CD4-positive, alpha-beta memory T cell (primary cell): ENCODE measurements at regions of chr7 and their contacts with region 1.

Region 1: GRCh38 chr7:104923010-104923421 is 91.0 kb upstream of the KMT2E start:
- DNase-seq: peak; percentile 63 to 79 (median 67)
- H3K4me3 ChIP-seq: no peak overlapping the region
- H3K4me3 Mint-ChIP-seq: no peak overlapping the region
- H3K27ac ChIP-seq: no peak overlapping the region
- H3K27ac Mint-ChIP-seq: peak overlapping the region in 5 of 7 donors; percentile 42 to 83 (median 62)
- H3K4me1 ChIP-seq: peaks cover 6% of the 10 kb centered on the region
- H3K4me1 Mint-ChIP-seq: peaks cover 0 to 6% (median 4%) of the 10 kb centered on the region in 4 donors
- H3K27me3 ChIP-seq: no peaks in the 10 kb centered on the region
- H3K27me3 Mint-ChIP-seq: no peaks in the 10 kb centered on the region

Region 2: GRCh38 chr7:103296901-103297836 is 1625.8 kb before region 1 on chr7 and contains the start of gene PMPCB:
- CTCF ChIA-PET with region 1: interaction called, 3 read pairs
- POLR2A ChIA-PET with region 1: no interaction called
- intact Hi-C with region 1: loop called (anchors 1 kb)
- DNase-seq: peak; percentile 93 to 96 (median 94)
- H3K4me3 ChIP-seq: peak within 1 kb of the TSS; percentile 70 to 76
- H3K4me3 Mint-ChIP-seq: peak within 1 kb of the TSS; percentile 83 to 94 (median 92)
- H3K27ac ChIP-seq: peak within 1 kb of the TSS; percentile 88
- H3K27ac Mint-ChIP-seq: peak within 1 kb of the TSS; percentile 90 to 96 (median 93)
- H3K4me1 ChIP-seq: peaks cover 29% of the 10 kb centered on the region
- H3K4me1 Mint-ChIP-seq: peaks cover 20 to 46% (median 30%) of the 10 kb centered on the region in 4 donors
- H3K27me3 ChIP-seq: no peaks in the 10 kb centered on the region
- H3K27me3 Mint-ChIP-seq: peaks cover 0 to under 1% of the 10 kb centered on the region in 2 donors
- total RNA-seq, gene PMPCB: 72.7 to 76.2 TPM

Region 3: GRCh38 chr7:104878577-104878976 is 44.4 kb before region 1 on chr7:
- CTCF ChIA-PET with region 1: interaction called, 339 read pairs
- POLR2A ChIA-PET with region 1: interaction called, 3 read pairs
- intact Hi-C with region 1: loop called (anchors 1 kb)
- DNase-seq: no peak
- H3K4me3 ChIP-seq: no peak overlapping the region
- H3K4me3 Mint-ChIP-seq: peak overlapping the region in 6 of 8 donors; percentile 5 to 68 (median 24)
- H3K27ac ChIP-seq: no peak overlapping the region
- H3K27ac Mint-ChIP-seq: peak overlapping the region in 4 of 7 donors; percentile 14 to 67 (median 32)
- H3K4me1 ChIP-seq: peaks cover 12% of the 10 kb centered on the region
- H3K4me1 Mint-ChIP-seq: peaks cover 4 to 17% (median 14%) of the 10 kb centered on the region in 4 donors
- H3K27me3 ChIP-seq: no peaks in the 10 kb centered on the region
- H3K27me3 Mint-ChIP-seq: no peaks in the 10 kb centered on the region

Region 4: DNA sequence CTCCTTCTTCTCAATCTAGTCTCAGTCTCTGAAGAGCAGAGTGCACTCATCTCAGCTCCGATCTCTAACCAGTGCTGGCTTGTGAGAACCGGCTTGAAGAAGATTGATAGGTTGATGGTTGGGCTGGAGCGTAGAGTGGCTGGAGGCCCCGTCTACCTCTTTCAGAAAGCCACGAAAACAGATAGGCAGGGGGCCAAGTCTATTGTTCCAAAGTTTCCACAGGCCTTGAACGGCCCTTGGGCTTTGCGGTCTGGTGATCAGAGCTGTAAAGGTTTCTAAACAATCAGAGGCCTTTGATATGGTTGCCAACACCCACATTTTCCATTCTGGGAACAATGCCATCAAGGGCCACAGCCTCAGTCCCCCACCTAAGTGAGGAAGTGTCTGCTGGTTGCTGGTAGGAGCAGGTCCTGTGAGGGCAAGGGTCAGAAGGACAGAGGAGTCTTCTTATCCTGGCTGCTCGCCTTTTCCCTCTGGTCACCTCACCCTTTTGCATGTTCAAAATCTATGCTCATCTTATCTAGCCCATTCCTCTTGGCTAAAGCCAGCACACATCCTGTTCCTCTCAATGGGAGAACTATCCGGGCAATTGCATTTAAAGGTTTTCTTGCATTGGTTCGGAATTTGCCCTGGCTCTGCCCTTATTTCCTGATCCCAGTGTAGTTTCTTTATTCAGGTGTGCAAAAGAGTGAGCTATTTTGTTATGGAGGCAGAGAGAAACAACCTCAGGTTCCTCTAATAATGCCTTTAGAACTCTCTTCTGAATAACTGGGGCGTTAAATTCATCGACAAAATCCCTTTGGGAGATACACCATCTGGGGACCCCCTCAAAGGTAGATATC is 20.7 kb after region 1 on chr7:
- CTCF ChIA-PET with region 1: interaction called, 10 read pairs
- POLR2A ChIA-PET with region 1: interaction called, 3 read pairs
- intact Hi-C with region 1: loop called (anchors 1 kb)
- DNase-seq: peak; percentile 75 to 92 (median 81)
- H3K4me3 ChIP-seq: peak overlapping the region; percentile 1 to 15
- H3K4me3 Mint-ChIP-seq: peak overlapping the region; percentile 82 to 92 (median 88)
- H3K27ac ChIP-seq: peak overlapping the region; percentile 94
- H3K27ac Mint-ChIP-seq: peak overlapping the region; percentile 100
- H3K4me1 ChIP-seq: peaks cover 59% of the 10 kb centered on the region
- H3K4me1 Mint-ChIP-seq: peaks cover 45 to 71% (median 58%) of the 10 kb centered on the region in 4 donors
- H3K27me3 ChIP-seq: no peaks in the 10 kb centered on the region
- H3K27me3 Mint-ChIP-seq: peaks cover 0 to 1% of the 10 kb centered on the region in 2 donors

Region 5: GRCh38 chr7:105336009-105336408 is 413.0 kb after region 1 on chr7:
- CTCF ChIA-PET with region 1: no interaction called
- POLR2A ChIA-PET with region 1: no interaction called
- intact Hi-C with region 1: loop called (anchors 1 kb)
- DNase-seq: peak in 3 of 5 donors; percentile 17 to 34 (median 22)
- H3K4me3 ChIP-seq: no peak overlapping the region
- H3K4me3 Mint-ChIP-seq: no peak overlapping the region
- H3K27ac ChIP-seq: no peak overlapping the region
- H3K27ac Mint-ChIP-seq: no peak overlapping the region
- H3K4me1 ChIP-seq: peaks cover 13% of the 10 kb centered on the region
- H3K4me1 Mint-ChIP-seq: peaks cover 19 to 31% (median 26%) of the 10 kb centered on the region in 4 donors
- H3K27me3 ChIP-seq: no peaks in the 10 kb centered on the region
- H3K27me3 Mint-ChIP-seq: no peaks in the 10 kb centered on the region

Region 6: GRCh38 chr7:105487579-105488571 is 564.9 kb after region 1 on chr7:
- CTCF ChIA-PET with region 1: interaction called, 3 read pairs
- POLR2A ChIA-PET with region 1: no interaction called
- intact Hi-C with region 1: loop called (anchors 2 kb)
- DNase-seq: peak in 4 of 5 donors; percentile 28 to 40 (median 30)
- H3K4me3 ChIP-seq: no peak overlapping the region
- H3K4me3 Mint-ChIP-seq: no peak overlapping the region
- H3K27ac ChIP-seq: no peak overlapping the region
- H3K27ac Mint-ChIP-seq: peak overlapping the region in 3 of 7 donors; percentile 0 to 86 (median 33)
- H3K4me1 ChIP-seq: no peaks in the 10 kb centered on the region
- H3K4me1 Mint-ChIP-seq: peaks cover 0 to 4% (median 3%) of the 10 kb centered on the region in 4 donors
- H3K27me3 ChIP-seq: no peaks in the 10 kb centered on the region
- H3K27me3 Mint-ChIP-seq: no peaks in the 10 kb centered on the region